ENCODE measurements at regions of chr2 and their contacts with region 1.

Region 1: DNA sequence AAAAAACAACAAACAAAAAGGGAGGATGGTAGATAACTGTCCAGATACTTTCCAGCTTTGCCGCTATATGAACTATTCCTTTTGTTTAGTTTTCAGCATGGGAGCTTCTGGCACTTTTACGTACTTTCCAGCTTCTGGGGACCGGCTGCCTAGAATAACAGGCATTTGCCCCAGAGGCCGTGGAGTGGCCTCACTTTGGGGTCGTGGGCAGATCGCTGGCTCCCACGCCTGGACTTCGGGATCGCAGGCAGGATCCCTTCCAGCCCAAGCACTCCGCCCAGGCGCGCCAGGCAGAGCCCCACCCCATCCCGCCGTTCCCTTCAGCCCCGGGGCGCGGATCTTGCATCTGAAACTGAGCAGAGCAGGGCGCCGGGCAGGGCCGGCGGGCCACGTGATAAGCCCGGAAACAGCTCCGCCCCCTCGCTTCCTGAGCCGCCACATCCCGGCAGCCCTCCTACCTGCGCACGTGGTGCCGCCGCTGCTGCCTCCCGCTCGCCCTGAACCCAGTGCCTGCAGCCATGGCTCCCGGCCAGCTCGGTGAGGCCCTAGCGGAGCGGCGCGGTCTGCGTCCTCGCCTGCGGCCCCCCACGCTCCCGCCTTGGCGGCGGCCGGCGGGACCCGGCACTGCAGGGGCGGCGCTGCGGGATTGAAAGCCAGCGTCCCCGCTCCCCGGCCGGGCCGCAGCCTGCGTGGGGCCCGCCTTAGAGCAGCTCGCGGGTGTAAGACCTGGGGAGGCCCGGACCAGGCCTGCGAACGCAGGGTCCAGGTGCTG is at the start of gene ATIC:
- DNase-seq: peak; percentile 75 to 93 (median 88)
- ATAC-seq: peak; percentile 93
- H3K4me3 ChIP-seq: peak within 1 kb of the TSS; percentile 91 to 99
- H3K4me3 Mint-ChIP-seq: peak within 1 kb of the TSS; percentile 95
- H3K27ac ChIP-seq: peak within 1 kb of the TSS; percentile 73 to 86
- H3K27ac Mint-ChIP-seq: peak within 1 kb of the TSS; percentile 92
- H3K4me1 ChIP-seq: peaks cover 13% of the 10 kb centered on the region
- H3K4me1 Mint-ChIP-seq: peaks cover 39% of the 10 kb centered on the region
- H3K27me3 ChIP-seq: no peaks in the 10 kb centered on the region
- H3K27me3 Mint-ChIP-seq: no peaks in the 10 kb centered on the region
- CTCF ChIP-seq: no peak
- total RNA-seq, gene ATIC: 37.9 to 39.3 TPM

Region 2: DNA sequence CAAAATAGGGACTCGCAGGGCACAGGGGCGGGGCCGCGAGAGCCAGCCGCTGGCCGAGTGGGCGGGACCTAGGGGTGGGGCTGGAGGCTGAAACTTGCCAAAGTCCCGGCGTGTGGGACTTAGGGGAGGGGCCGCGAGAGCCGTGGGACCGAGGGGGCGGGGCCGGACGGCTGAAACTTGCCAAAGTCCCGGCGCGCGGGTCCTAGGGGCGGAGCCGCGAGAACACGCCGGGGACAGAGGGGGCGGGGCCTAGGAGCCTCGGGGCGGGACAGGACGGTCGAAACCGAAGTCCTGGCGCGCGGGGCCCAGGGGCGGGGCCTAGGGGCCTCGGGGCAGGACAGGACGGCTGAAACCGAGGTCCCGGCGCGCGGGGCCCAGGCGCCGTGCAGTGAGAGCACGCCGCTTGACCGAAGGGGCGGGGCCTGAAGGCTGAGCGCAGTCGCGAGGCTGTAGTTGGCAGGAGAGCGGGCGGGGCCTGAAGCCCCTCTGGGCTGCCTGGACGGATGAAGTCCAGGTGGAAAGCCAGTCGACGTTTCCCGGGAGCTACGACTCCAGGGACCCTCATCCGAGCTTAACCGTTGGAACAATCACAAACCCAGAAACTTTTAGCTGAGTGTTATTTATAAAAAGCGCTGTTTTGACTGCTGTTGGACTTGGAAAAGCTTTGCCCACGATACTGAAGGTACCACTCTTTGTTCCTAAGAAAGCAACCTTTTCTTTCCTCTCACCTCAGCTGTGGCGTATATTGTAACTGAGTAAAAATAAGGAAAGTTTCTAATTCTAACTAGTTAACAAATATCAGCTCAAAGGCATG is 501.9 kb before region 1 on chr2:
- CTCF ChIA-PET with region 1: no interaction called
- POLR2A ChIA-PET with region 1: interaction called, 4 read pairs
- intact Hi-C with region 1: loop called (anchors 1 to 5 kb)
- DNase-seq: peak; percentile 90 to 98 (median 97)
- ATAC-seq: peak; percentile 79
- H3K4me3 ChIP-seq: peak overlapping the region; percentile 88 to 98
- H3K4me3 Mint-ChIP-seq: peak overlapping the region; percentile 99
- H3K27ac ChIP-seq: peak overlapping the region; percentile 50 to 78
- H3K27ac Mint-ChIP-seq: peak overlapping the region; percentile 72
- H3K4me1 ChIP-seq: peaks cover 17% of the 10 kb centered on the region
- H3K4me1 Mint-ChIP-seq: peaks cover 33% of the 10 kb centered on the region
- H3K27me3 ChIP-seq: no peaks in the 10 kb centered on the region
- H3K27me3 Mint-ChIP-seq: no peaks in the 10 kb centered on the region
- CTCF ChIP-seq: no peak

Region 3: GRCh38 chr2:215188078-215188477 is 123.7 kb before region 1 on chr2:
- CTCF ChIA-PET with region 1: no interaction called
- POLR2A ChIA-PET with region 1: no interaction called
- intact Hi-C with region 1: no loop called
- DNase-seq: no peak
- ATAC-seq: no peak
- H3K4me3 ChIP-seq: no peak overlapping the region
- H3K4me3 Mint-ChIP-seq: no peak overlapping the region
- H3K27ac ChIP-seq: no peak overlapping the region
- H3K27ac Mint-ChIP-seq: no peak overlapping the region
- H3K4me1 ChIP-seq: no peaks in the 10 kb centered on the region
- H3K4me1 Mint-ChIP-seq: no peaks in the 10 kb centered on the region
- H3K27me3 ChIP-seq: no peaks in the 10 kb centered on the region
- H3K27me3 Mint-ChIP-seq: peaks cover 10% of the 10 kb centered on the region
- CTCF ChIP-seq: no peak

Region 4: GRCh38 chr2:215540650-215541049 is 228.8 kb after region 1 on chr2:
- CTCF ChIA-PET with region 1: no interaction called
- POLR2A ChIA-PET with region 1: no interaction called
- intact Hi-C with region 1: no loop called
- DNase-seq: no peak
- ATAC-seq: no peak
- H3K4me3 ChIP-seq: no peak overlapping the region
- H3K4me3 Mint-ChIP-seq: no peak overlapping the region
- H3K27ac ChIP-seq: no peak overlapping the region
- H3K27ac Mint-ChIP-seq: no peak overlapping the region
- H3K4me1 ChIP-seq: no peaks in the 10 kb centered on the region
- H3K4me1 Mint-ChIP-seq: no peaks in the 10 kb centered on the region
- H3K27me3 ChIP-seq: no peaks in the 10 kb centered on the region
- H3K27me3 Mint-ChIP-seq: peaks cover 6% of the 10 kb centered on the region
- CTCF ChIP-seq: no peak

Region 5: GRCh38 chr2:216013080-216013909 is 701.5 kb after region 1 on chr2 and contains the start of gene MREG:
- CTCF ChIA-PET with region 1: no interaction called
- POLR2A ChIA-PET with region 1: no interaction called
- intact Hi-C with region 1: loop called in 1 of 2 experiments (anchors 5 kb)
- DNase-seq: peak; percentile 66 to 92 (median 83)
- ATAC-seq: peak; percentile 80
- H3K4me3 ChIP-seq: peak within 1 kb of the TSS; percentile 44 to 80
- H3K4me3 Mint-ChIP-seq: peak within 1 kb of the TSS; percentile 85
- H3K27ac ChIP-seq: peak within 1 kb of the TSS; percentile 1 to 3
- H3K27ac Mint-ChIP-seq: peak within 1 kb of the TSS; percentile 61
- H3K4me1 ChIP-seq: peaks cover 36% of the 10 kb centered on the region
- H3K4me1 Mint-ChIP-seq: peaks cover 65% of the 10 kb centered on the region
- H3K27me3 ChIP-seq: no peaks in the 10 kb centered on the region
- H3K27me3 Mint-ChIP-seq: no peaks in the 10 kb centered on the region
- CTCF ChIP-seq: peak; percentile 67
- total RNA-seq, gene MREG: 3.2 to 3.6 TPM

Region 6: DNA sequence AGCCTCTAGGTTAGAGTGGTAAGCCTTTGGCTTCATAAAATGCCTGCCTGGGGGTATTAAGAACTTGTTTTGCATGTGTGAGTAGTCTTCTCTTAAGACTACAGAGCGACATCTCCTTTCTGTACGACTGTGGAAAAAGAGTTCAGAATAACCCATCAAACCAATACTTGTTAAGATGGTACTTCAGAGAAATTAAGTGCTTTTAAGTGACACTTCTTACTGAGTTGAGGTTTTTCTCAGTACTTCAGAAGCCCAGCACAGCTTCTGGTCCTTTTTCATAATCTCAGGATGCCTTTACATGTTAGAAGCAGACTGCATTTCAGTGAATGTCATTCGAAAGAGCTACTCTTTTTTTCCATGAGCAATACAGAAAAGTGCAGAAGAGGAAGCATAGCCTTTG is 808.2 kb after region 1 on chr2:
- CTCF ChIA-PET with region 1: no interaction called
- POLR2A ChIA-PET with region 1: no interaction called
- intact Hi-C with region 1: loop called in 1 of 2 experiments (anchors 5 kb)
- DNase-seq: peak in 2 of 9 experiments; percentile 19 to 52
- ATAC-seq: peak; percentile 47
- H3K4me3 ChIP-seq: no peak overlapping the region
- H3K4me3 Mint-ChIP-seq: peak overlapping the region; percentile 23
- H3K27ac ChIP-seq: peak overlapping the region in 1 of 2 experiments; percentile 5
- H3K27ac Mint-ChIP-seq: peak overlapping the region; percentile 80
- H3K4me1 ChIP-seq: peaks cover 65% of the 10 kb centered on the region
- H3K4me1 Mint-ChIP-seq: peaks cover 77% of the 10 kb centered on the region
- H3K27me3 ChIP-seq: no peaks in the 10 kb centered on the region
- H3K27me3 Mint-ChIP-seq: no peaks in the 10 kb centered on the region
- CTCF ChIP-seq: no peak

Region 7: DNA sequence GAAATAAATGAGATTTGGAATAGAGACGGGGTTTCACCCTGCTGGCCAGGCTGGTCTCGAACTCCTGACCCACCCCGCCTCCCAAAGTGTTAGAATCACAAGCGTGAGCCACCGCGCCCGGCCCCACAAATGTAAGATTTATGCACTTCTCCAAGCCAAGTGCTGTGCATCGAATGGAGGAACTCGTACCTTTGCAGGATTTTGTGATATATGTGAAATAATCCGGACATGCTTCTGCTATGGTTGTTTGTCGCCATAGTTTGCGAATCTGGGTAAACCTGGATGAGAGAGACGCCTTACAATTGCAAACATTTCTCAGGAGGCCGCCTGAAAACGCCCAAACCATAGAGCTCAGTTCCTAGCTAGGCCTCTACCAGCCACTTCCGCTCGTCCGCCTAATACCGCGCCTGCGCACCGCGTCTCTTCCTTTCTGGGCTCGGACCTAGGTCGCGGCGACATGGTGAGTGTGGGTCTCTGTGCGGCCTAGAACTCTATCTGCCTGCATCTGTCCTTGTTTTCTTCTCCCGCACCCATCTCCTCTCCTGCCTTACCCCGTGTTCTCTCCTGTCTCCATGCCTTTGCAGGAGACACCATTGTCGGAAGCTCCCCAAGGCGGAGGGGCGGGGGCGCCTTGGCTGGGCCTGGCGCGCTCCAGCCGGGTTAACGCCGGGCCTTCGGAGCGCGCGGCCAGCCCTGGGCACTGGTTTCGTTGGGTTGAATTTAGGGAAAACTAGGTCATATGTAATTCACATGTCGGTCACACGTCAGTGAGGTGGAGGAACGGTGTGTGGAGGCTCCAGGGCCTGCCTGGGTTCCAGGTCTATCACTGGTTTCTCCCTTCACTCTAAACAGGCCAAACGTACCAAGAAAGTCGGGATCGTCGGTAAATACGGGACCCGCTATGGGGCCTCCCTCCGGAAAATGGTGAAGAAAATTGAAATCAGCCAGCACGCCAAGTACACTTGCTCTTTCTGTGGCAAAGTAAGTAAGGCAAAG is 1186.9 kb after region 1 on chr2 and contains the start of gene RPL37A:
- CTCF ChIA-PET with region 1: no interaction called
- POLR2A ChIA-PET with region 1: no interaction called
- intact Hi-C with region 1: loop called (anchors 5 to 10 kb)
- DNase-seq: peak; percentile 75 to 96 (median 87)
- ATAC-seq: peak; percentile 96
- H3K4me3 ChIP-seq: peak within 1 kb of the TSS; percentile 78 to 89
- H3K4me3 Mint-ChIP-seq: peak within 1 kb of the TSS; percentile 99
- H3K27ac ChIP-seq: peak within 1 kb of the TSS; percentile 78 to 87
- H3K27ac Mint-ChIP-seq: peak within 1 kb of the TSS; percentile 94
- H3K4me1 ChIP-seq: peaks cover 25% of the 10 kb centered on the region
- H3K4me1 Mint-ChIP-seq: peaks cover 52% of the 10 kb centered on the region
- H3K27me3 ChIP-seq: no peaks in the 10 kb centered on the region
- H3K27me3 Mint-ChIP-seq: no peaks in the 10 kb centered on the region
- CTCF ChIP-seq: no peak
- total RNA-seq, gene RPL37A: 4,048 to 4,064 TPM

Measured in CD8-positive, alpha-beta T cell (primary cell).